AG04449 (cell line): ENCODE measurements at regions of chr11 and their contacts with region 1.

Region 1: DNA sequence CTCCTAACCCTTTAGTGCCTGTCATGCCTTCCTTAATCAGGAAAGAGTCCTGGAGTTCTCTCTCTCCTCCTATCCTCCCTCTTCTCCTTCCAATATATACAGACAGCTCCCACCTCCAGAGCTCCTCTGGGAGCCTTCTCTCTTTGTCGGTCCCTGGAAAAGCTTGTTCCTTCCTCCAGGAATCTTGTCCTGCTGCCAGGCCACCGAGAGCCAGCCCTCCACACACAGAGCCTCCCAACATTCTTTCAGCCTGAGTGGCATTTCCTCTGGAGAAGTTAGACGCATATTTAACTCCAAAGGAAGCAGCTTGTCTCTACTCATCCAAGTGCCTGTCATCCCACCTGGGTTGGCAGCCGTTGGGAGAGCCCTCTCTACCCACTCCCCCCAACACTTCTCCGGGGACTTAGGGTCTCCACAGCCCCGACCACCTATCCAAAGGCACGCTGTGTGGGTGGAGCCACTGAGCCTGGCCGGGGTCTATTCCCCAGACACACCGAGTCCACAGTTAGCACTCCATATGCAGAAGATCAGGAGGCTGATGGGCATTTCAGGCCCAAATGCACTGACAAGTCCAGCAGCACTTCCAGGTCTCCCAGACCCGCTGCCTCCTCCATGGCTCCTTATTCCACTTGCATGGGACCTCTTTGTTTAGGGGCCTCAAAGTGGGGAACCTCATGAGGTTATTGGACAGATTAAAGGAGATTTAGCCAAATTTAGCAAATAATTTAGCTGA is 31.1 kb downstream of the DKK3 start:
- DNase-seq: peak; percentile 70
- H3K4me3 ChIP-seq: no peak overlapping the region; the same call in 1 of the 2 replicates
- CTCF ChIP-seq: no peak

Region 2: DNA sequence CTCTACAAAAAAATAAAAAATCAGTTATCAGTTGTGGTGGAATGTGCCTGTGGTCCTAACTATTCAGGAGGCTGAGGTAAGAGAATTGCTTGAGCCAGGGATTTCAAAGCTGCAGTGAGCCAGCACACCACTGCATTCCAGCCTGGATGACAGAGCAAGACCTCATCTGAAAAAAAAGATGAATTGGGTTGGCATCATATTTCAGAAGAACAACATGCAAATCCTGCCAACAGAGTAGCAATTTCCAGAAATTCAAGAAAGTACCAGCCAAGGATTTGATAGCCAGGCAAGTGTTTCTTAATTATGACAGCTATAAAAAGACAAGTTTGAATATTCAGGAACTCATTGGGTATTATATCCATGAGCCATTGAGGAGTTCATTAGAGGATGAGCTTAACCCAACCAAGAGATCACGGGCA is 60.4 kb before region 1 on chr11:
- CTCF ChIA-PET with region 1: no interaction called
- POLR2A ChIA-PET with region 1: no interaction called
- DNase-seq: peak; percentile 68
- H3K4me3 ChIP-seq: no peak overlapping the region
- CTCF ChIP-seq: no peak

Region 3: GRCh38 chr11:11987503-11988022 is 10.2 kb after region 1 on chr11:
- CTCF ChIA-PET with region 1: interaction called, 18 read pairs
- POLR2A ChIA-PET with region 1: interaction called, 7 read pairs
- DNase-seq: no peak
- H3K4me3 ChIP-seq: no peak overlapping the region
- CTCF ChIP-seq: peak; percentile 28

Region 4: GRCh38 chr11:12235947-12236743 is 258.8 kb after region 1 on chr11:
- CTCF ChIA-PET with region 1: no interaction called
- POLR2A ChIA-PET with region 1: no interaction called
- DNase-seq: no peak
- H3K4me3 ChIP-seq: no peak overlapping the region
- CTCF ChIP-seq: peak; percentile 46